RWPE1 (cell line): ENCODE measurements at regions of chr1 and their contacts with region 1.

Region 1: GRCh38 chr1:174982971-174983689 is 16.6 kb upstream of the CACYBP start:
- DNase-seq: peak; percentile 17
- H3K27ac ChIP-seq: no peak overlapping the region
- CTCF ChIP-seq: peak; percentile 61

Region 2: DNA sequence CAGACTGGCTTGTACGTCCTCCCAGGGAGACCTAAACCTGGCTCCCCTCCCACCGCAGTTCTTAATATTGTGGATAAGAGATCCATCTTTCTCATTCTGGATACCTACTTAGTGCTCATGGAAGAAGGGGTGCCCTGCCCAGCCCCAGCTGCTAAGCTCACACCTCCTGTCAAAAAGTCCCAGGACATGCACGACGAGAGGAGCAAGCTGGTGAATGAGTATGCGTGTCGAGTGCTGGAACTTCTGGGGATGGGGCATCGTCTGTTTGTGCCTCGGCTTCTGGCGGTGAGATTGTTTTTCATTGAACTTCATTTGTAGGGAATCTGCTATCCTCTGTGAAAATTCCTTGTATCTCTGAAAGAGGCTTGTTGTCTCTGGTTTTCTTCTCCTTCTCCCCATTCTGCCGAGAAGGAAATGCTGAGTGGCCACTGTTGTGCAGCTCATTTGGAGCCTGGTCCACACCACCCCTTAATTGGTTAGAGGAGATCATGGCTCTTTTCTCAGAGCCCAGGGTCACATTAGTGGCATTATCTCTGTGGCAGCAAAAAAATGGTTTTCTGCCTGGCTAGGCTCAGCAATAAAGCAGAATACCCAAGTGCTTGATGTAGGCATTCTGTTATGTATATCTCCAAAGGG is 182.8 kb before region 1 on chr1:
- CTCF ChIA-PET with region 1: interaction called, 11 read pairs
- POLR2A ChIA-PET with region 1: no interaction called
- DNase-seq: no peak
- H3K27ac ChIP-seq: peak overlapping the region; percentile 79
- CTCF ChIP-seq: no peak

Region 3: DNA sequence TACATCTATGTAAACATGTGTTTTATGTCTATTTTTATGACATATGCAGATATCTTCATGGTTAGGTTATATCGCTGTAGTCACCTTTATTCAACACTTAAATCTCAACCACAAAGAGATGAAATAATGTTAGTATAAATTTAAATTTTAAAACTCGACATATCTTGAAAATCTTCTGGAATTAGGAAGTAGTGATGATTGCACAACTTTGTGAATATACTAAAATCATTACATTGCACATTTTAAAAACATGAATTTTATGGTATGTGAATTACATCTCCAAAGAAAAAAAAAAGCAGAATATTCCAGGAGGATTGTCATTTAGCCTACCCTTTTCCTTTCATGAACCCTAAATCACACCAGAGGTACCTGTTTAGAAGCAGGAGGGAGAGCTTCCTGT is 22.8 kb before region 1 on chr1:
- CTCF ChIA-PET with region 1: no interaction called
- POLR2A ChIA-PET with region 1: no interaction called
- DNase-seq: no peak
- H3K27ac ChIP-seq: no peak overlapping the region
- CTCF ChIP-seq: no peak